ENCODE measurements at regions of chr10 and their contacts with region 1.

Region 1: GRCh38 chr10:97553575-97554031 is 19.0 kb upstream of the ANKRD2 start:
- DNase-seq: peak; percentile 56
- H3K4me3 ChIP-seq: no peak overlapping the region
- H3K27ac ChIP-seq: no peak overlapping the region
- H3K4me1 ChIP-seq: peaks cover 35% of the 10 kb centered on the region
- H3K27me3 ChIP-seq: no peaks in the 10 kb centered on the region
- CTCF ChIP-seq: peak; percentile 89 to 98

Region 2: DNA sequence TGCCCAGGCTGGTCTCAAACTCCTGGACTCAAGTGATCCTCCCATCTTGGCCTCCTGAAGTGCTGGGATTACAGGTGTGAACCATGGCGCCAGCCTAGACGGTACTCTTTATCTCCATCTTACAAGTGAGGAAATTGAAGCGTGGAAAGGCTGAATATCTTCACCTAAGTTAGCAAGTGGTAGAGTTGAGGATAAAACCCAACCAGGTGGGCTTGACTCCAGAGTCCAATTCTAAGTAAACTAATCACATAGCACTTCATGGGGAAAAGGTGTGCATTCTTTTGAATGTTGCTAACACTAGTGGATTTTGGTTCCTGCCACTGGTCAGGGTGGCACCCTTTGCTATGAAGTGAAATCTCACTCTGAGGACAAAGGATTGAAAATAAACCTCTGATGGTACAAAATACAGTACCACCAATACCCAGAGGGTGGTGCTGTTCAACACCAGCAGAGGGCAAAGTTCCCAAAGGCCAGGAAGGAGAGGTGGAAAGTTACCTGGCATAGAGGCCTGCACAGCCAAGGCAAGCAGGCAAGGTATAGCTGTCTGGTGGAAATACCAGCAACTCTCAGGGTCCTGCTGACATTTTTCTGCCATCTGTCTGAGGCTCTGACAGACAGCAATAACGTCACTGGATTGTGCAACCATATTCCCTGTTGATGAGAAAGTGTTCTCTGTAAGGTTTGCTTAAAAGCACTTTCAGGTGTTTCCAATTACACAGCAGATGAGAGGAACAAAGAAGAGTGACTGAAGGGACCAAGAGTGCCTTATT is 90.1 kb before region 1 on chr10:
- CTCF ChIA-PET with region 1: interaction called, 3 read pairs
- dilution Hi-C with region 1: no loop called
- in situ Hi-C with region 1: loop called in 1 of 2 experiments (anchors 10 kb)
- intact Hi-C with region 1: loop called (anchors 1 kb)
- DNase-seq: peak; percentile 65
- H3K4me3 ChIP-seq: no peak overlapping the region
- H3K27ac ChIP-seq: no peak overlapping the region
- H3K4me1 ChIP-seq: peaks cover 26% of the 10 kb centered on the region
- H3K27me3 ChIP-seq: no peaks in the 10 kb centered on the region
- CTCF ChIP-seq: peak; percentile 90 to 91

Region 3: DNA sequence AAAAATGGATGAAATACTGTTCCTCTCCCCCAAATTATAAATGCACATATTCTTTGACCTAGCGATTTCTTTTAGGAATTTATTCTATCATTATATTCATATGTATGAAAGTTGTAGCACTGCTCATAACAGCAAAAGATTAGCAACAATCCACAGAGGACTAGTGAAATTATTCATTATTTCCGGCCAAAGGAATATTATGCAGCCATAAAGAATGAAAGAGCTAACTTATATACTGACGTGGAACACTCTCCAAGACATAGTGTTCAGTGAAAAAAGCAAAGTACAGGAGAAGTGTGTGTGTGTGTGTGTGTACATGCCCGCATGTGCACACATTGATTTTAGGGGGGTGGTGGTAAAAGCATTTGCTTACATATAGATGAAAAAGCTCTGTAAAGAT is 78.7 kb before region 1 on chr10:
- CTCF ChIA-PET with region 1: no interaction called
- dilution Hi-C with region 1: no loop called
- in situ Hi-C with region 1: loop called in 1 of 2 experiments (anchors 5 kb)
- intact Hi-C with region 1: no loop called
- DNase-seq: no peak
- H3K4me3 ChIP-seq: no peak overlapping the region
- H3K27ac ChIP-seq: no peak overlapping the region
- H3K4me1 ChIP-seq: peaks cover 20% of the 10 kb centered on the region
- H3K27me3 ChIP-seq: no peaks in the 10 kb centered on the region
- CTCF ChIP-seq: no peak

Region 4: GRCh38 chr10:97508342-97508741 is 45.3 kb before region 1 on chr10:
- CTCF ChIA-PET with region 1: no interaction called
- dilution Hi-C with region 1: loop called (anchors 5 kb)
- in situ Hi-C with region 1: no loop called
- intact Hi-C with region 1: no loop called
- DNase-seq: peak; percentile 55
- H3K4me3 ChIP-seq: no peak overlapping the region
- H3K27ac ChIP-seq: no peak overlapping the region
- H3K4me1 ChIP-seq: peaks cover 2% of the 10 kb centered on the region
- H3K27me3 ChIP-seq: no peaks in the 10 kb centered on the region
- CTCF ChIP-seq: no peak

Region 5: GRCh38 chr10:97534746-97535367 is 18.7 kb before region 1 on chr10:
- CTCF ChIA-PET with region 1: no interaction called
- dilution Hi-C with region 1: no loop called
- in situ Hi-C with region 1: no loop called
- intact Hi-C with region 1: loop called (anchors 1 kb)
- DNase-seq: no peak
- H3K4me3 ChIP-seq: no peak overlapping the region
- H3K27ac ChIP-seq: no peak overlapping the region
- H3K4me1 ChIP-seq: peaks cover 13% of the 10 kb centered on the region
- H3K27me3 ChIP-seq: no peaks in the 10 kb centered on the region
- CTCF ChIP-seq: peak; percentile 45 to 73

Region 6: GRCh38 chr10:98062424-98062823 is 508.8 kb after region 1 on chr10:
- CTCF ChIA-PET with region 1: no interaction called
- dilution Hi-C with region 1: no loop called
- in situ Hi-C with region 1: no loop called
- intact Hi-C with region 1: no loop called
- DNase-seq: no peak
- H3K4me3 ChIP-seq: no peak overlapping the region
- H3K27ac ChIP-seq: no peak overlapping the region
- H3K4me1 ChIP-seq: no peaks in the 10 kb centered on the region
- H3K27me3 ChIP-seq: no peaks in the 10 kb centered on the region
- CTCF ChIP-seq: no peak